Activated CD4-positive, alpha-beta T cell treated with anti-CD3 and anti-CD28 coated beads, Interleukin-2, amount 10 ng/mL, durations not matched to agents 7 days and 5 days (primary cell): ENCODE measurements at regions of chr15 and their contacts with region 1.

Region 1: DNA sequence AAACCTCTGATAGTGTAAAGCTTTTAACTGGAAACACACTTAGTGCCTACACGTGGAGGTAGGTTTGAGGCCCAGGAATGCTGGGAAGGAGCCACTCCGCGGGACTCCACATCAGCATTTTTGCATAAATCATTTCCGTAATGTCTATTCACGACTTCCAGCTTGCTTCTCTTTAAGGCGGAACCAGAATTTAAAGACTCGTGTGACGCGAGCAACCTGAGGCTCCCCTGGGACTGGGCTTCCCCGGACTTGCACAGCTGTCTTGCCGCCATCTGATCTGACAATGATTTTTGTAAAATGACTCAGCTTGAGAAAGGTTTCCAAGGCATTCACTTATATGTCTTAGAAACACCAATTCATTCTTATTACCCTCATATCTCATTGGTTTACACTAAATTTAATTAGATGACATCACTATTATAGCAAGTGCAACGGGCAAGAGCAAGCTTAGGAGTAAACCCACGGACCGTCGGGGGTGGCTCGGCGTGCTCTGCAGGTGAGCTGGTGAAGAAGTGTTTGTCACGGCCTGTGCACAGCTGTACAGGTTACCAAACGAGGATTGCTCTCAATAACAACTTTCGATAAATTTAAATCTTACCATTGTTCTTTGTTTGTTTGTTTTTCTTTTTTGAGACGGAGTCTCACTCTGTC is 95.2 kb downstream of the CHSY1 start:
- DNase-seq: no peak
- H3K4me3 Mint-ChIP-seq: no peak overlapping the region
- H3K27ac Mint-ChIP-seq: no peak overlapping the region
- H3K4me1 Mint-ChIP-seq: peaks cover 29% of the 10 kb centered on the region
- H3K27me3 Mint-ChIP-seq: no peaks in the 10 kb centered on the region

Region 2: DNA sequence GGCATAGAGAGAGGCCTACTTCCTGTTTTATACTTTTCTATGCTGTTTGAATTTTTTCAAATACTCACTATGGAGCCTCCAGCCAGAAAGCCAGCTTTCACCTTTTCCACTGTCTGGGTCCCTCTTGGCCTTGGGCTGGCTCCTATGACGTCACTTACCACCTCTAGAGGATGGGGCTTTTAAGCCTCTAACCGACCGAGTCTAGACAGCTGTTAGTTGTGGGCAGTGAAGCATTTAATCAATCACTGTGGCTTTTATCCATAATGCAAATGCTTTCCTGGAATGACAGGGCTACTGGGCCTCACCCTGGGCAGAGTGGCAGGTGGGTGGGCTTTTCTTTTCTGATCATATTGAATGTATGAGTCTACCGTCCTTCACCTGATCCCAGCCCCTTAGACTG is 175.5 kb before region 1 on chr15:
- CTCF ChIA-PET with region 1: no interaction called
- POLR2A ChIA-PET with region 1: no interaction called
- DNase-seq: no peak
- H3K4me3 Mint-ChIP-seq: no peak overlapping the region
- H3K27ac Mint-ChIP-seq: no peak overlapping the region
- H3K4me1 Mint-ChIP-seq: no peaks in the 10 kb centered on the region
- H3K27me3 Mint-ChIP-seq: peaks cover 35% of the 10 kb centered on the region

Region 3: DNA sequence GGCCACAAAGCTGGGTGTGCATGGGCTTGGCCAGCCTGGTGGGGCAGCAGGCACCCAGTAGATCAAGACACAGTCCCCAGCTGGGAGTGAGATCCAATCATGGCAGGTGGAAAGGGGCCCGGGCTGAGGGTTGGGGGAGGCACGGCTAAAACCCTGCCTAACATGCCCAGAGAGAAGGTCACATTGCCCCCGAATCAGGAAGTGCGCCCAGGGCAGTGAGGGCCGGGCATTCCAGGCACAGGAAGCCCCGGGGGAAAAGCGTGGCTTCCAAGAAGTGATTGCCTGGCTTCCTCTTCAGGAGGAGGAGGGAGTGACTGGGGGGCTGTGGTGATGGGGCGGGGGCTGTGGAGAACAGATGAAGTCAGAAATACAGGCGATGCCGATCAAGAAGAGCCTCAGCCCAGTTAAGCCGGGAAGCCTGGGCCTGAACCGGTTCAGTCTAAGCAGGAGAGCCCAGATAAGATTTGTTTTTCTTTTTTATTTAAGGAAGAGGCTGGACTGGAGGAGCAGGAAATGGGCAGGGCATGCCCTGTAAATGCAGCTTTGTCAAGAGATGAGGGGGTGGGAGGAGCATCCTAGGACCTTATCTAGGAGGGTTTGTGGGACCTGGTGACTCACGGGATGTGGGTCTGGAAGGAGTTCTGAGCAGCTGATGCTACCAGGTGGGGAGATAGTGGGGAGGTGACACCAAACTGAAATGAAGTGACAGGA is 11.3 kb after region 1 on chr15:
- CTCF ChIA-PET with region 1: interaction called, 14 read pairs
- POLR2A ChIA-PET with region 1: interaction called, 3 read pairs
- DNase-seq: peak; percentile 84
- H3K4me3 Mint-ChIP-seq: peak overlapping the region; percentile 28
- H3K27ac Mint-ChIP-seq: peak overlapping the region; percentile 92
- H3K4me1 Mint-ChIP-seq: peaks cover 37% of the 10 kb centered on the region
- H3K27me3 Mint-ChIP-seq: no peaks in the 10 kb centered on the region

Region 4: GRCh38 chr15:101206176-101206591 is 49.5 kb after region 1 on chr15:
- CTCF ChIA-PET with region 1: no interaction called
- POLR2A ChIA-PET with region 1: no interaction called
- DNase-seq: peak; percentile 72
- H3K4me3 Mint-ChIP-seq: peak overlapping the region; percentile 69
- H3K27ac Mint-ChIP-seq: peak overlapping the region; percentile 91
- H3K4me1 Mint-ChIP-seq: peaks cover 83% of the 10 kb centered on the region
- H3K27me3 Mint-ChIP-seq: no peaks in the 10 kb centered on the region